HEK293T (cell line): ENCODE measurements at regions of chr4 and their contacts with region 1.

Region 1: GRCh38 chr4:77095101-77095821 is 19.5 kb upstream of the CCNI start:
- DNase-seq: peak; percentile 72

Region 2: DNA sequence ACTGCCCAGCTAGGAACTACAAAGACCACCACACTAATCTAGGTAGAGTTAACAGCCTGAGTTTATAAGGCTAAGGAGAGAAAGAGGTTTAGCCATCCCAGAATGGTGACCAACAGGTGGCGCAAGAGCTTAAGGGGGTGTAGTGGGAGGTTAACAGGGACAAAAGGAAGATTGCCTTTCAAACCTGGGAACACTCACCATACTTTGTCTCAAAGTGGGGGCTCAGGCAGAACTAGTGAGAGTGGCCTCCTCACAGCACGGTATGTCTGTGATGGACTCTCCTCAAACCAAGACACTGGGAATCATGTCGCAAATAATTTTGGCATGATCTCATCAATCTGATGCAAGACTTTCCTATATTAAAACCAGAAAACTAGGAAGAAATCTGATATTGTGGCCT is 42.9 kb before region 1 on chr4:
- CTCF ChIA-PET with region 1: no interaction called
- POLR2A ChIA-PET with region 1: no interaction called
- DNase-seq: peak; percentile 46

Region 3: GRCh38 chr4:77157859-77158486 is 62.7 kb after region 1 on chr4:
- CTCF ChIA-PET with region 1: interaction called, 3 read pairs
- POLR2A ChIA-PET with region 1: interaction called, 10 read pairs
- DNase-seq: peak; percentile 82

Region 4: DNA sequence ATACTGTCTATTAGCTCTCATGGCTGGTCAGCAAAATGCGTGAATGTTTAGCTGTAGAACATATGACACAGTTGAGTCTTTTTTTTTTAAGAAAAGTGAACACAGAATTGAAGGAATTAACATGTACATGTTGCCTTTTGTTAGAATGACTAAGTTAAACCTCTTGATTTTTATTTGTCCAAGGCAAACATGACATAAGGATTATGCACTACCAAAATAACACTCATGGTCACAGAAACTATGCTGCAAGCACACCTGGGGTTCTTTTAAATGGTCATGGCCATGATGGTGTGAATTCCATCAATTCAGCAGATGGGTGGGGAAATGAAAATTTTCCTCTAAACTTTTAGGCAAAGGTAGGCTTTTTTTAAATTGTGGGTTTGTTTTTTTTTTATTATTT is 430.3 kb after region 1 on chr4:
- CTCF ChIA-PET with region 1: no interaction called
- POLR2A ChIA-PET with region 1: no interaction called
- DNase-seq: no peak